IMR-90 (cell line): ENCODE measurements at regions of chr3 and their contacts with region 1.

Region 1: GRCh38 chr3:77873598-77873997 is 833.7 kb downstream of the ROBO2 start:
- DNase-seq: no peak
- ATAC-seq: no peak
- H3K4me3 ChIP-seq: no peak overlapping the region
- H3K27ac ChIP-seq: no peak overlapping the region
- H3K4me1 ChIP-seq: no peaks in the 10 kb centered on the region
- H3K27me3 ChIP-seq: no peaks in the 10 kb centered on the region
- CTCF ChIP-seq: no peak
- POLR2A ChIP-seq: no peak
- RAD21 ChIP-seq: no peak

Region 2: DNA sequence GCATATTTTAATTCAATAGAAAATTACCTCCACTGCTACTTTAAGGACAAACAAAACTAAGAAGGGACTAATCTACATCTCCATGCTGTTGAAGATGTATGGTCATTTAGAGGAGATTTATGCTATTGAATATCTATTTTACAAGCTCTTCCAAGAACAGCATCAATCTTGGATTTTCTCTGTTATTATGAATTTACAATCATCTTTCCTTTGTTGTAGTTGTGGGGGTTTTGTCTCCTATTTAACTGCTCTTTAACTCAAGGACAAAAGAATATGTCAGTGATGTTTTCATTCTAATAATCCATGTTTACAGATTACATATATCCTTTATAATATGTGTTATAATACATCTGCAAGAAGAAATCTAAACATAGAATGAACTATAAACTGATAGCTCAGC is 74.1 kb after region 1 on chr3:
- CTCF ChIA-PET with region 1: no interaction called
- POLR2A ChIA-PET with region 1: no interaction called
- dilution Hi-C with region 1: no loop called
- in situ Hi-C with region 1: no loop called
- intact Hi-C with region 1: loop called (anchors 1 kb)
- DNase-seq: no peak
- ATAC-seq: no peak
- H3K4me3 ChIP-seq: no peak overlapping the region
- H3K27ac ChIP-seq: no peak overlapping the region
- H3K4me1 ChIP-seq: no peaks in the 10 kb centered on the region
- H3K27me3 ChIP-seq: no peaks in the 10 kb centered on the region
- CTCF ChIP-seq: no peak
- POLR2A ChIP-seq: no peak
- RAD21 ChIP-seq: no peak